T-cell (primary cell): ENCODE measurements at regions of chr16 and their contacts with region 1.

Region 1: GRCh38 chr16:53435066-53435688 is 906 bp downstream of the RBL2 start:
- DNase-seq: peak; percentile 50 to 84 (median 62)
- ATAC-seq: peak; percentile 59 to 71 (median 65)
- H3K4me3 ChIP-seq: peak overlapping the region; percentile 79 to 97
- H3K4me3 Mint-ChIP-seq: peak overlapping the region; percentile 95 to 99 (median 99)
- H3K27ac ChIP-seq: peak overlapping the region; percentile 87
- H3K27ac Mint-ChIP-seq: peak overlapping the region; percentile 99
- H3K4me1 ChIP-seq: peaks cover 15 to 26% of the 10 kb centered on the region in 2 experiments
- H3K4me1 Mint-ChIP-seq: peaks cover 44 to 52% (median 49%) of the 10 kb centered on the region in 3 donors
- H3K27me3 ChIP-seq: no peaks in the 10 kb centered on the region
- H3K27me3 Mint-ChIP-seq: no peaks in the 10 kb centered on the region

Region 2: GRCh38 chr16:53297477-53297876 is 137.7 kb before region 1 on chr16:
- CTCF ChIA-PET with region 1: no interaction called
- POLR2A ChIA-PET with region 1: interaction called in 1 of 2 experiments, 11 read pairs
- DNase-seq: no peak
- ATAC-seq: no peak
- H3K4me3 ChIP-seq: no peak overlapping the region
- H3K4me3 Mint-ChIP-seq: no peak overlapping the region
- H3K27ac ChIP-seq: no peak overlapping the region
- H3K27ac Mint-ChIP-seq: no peak overlapping the region
- H3K4me1 ChIP-seq: no peaks in the 10 kb centered on the region
- H3K4me1 Mint-ChIP-seq: no peaks in the 10 kb centered on the region
- H3K27me3 ChIP-seq: no peaks in the 10 kb centered on the region
- H3K27me3 Mint-ChIP-seq: no peaks in the 10 kb centered on the region

Region 3: GRCh38 chr16:53449632-53450517 is 14.7 kb after region 1 on chr16:
- CTCF ChIA-PET with region 1: interaction called, 4 to 31 read pairs
- POLR2A ChIA-PET with region 1: interaction called, 9 to 19 read pairs
- DNase-seq: peak in 1 of 35 experiments; percentile 25
- ATAC-seq: peak in 2 of 4 experiments; percentile 41 to 55
- H3K4me3 ChIP-seq: peak overlapping the region in 1 of 2 donors; percentile 44
- H3K4me3 Mint-ChIP-seq: peak overlapping the region; percentile 67 to 78 (median 70)
- H3K27ac ChIP-seq: peak overlapping the region; percentile 59
- H3K27ac Mint-ChIP-seq: peak overlapping the region; percentile 91 to 92
- H3K4me1 ChIP-seq: peaks cover 39 to 67% of the 10 kb centered on the region in 2 experiments
- H3K4me1 Mint-ChIP-seq: peaks cover 71 to 79% (median 78%) of the 10 kb centered on the region in 3 donors
- H3K27me3 ChIP-seq: no peaks in the 10 kb centered on the region
- H3K27me3 Mint-ChIP-seq: no peaks in the 10 kb centered on the region

Region 4: DNA sequence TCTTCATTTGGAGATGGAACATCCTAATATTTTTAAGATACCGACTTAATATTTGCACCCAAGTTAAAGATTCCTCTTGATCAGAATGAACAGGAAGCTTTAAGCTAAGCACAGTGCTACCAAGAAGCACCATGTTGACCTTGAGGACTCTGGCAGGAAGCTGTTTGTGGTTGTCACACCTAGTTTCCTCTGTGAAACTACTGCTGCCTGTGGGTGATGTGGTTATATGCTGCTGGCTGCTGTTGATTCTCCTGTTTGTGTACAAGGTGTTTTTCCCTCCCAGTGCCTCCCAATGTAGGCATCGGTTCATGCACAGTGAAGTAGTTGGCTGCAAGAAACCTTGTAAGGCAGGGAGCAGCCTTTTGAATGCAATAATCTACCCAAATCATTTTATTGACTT is 22.5 kb after region 1 on chr16:
- CTCF ChIA-PET with region 1: interaction called, 6 to 19 read pairs
- POLR2A ChIA-PET with region 1: interaction called, 9 to 14 read pairs
- DNase-seq: peak; percentile 49 to 92 (median 76)
- ATAC-seq: peak; percentile 79 to 86 (median 82)
- H3K4me3 ChIP-seq: peak overlapping the region; percentile 43 to 44
- H3K4me3 Mint-ChIP-seq: peak overlapping the region; percentile 77 to 83 (median 78)
- H3K27ac ChIP-seq: peak overlapping the region; percentile 80
- H3K27ac Mint-ChIP-seq: peak overlapping the region; percentile 90 to 95
- H3K4me1 ChIP-seq: peaks cover 52 to 82% of the 10 kb centered on the region in 2 experiments
- H3K4me1 Mint-ChIP-seq: peaks cover 90 to 95% (median 95%) of the 10 kb centered on the region in 3 donors
- H3K27me3 ChIP-seq: no peaks in the 10 kb centered on the region
- H3K27me3 Mint-ChIP-seq: no peaks in the 10 kb centered on the region

Region 5: DNA sequence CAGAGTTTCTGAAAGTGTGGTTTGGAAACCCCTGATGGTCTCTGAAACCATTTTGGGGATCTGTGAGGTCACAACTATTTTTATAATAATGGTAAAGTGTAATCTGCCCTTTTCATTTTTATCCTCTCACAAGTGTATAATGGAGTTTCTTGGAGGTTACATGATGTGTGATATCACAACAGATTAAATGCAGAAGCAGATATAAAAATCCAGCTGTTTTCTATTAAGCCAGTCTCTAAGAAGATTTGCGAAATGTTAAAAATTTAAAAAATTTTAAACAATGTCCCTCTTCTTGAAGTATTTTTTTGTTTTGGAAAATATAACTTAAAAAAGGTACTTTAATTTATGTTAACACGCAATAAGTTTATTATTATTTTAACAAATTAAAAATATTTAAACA is 219.8 kb after region 1 on chr16:
- CTCF ChIA-PET with region 1: no interaction called
- POLR2A ChIA-PET with region 1: no interaction called
- DNase-seq: no peak
- ATAC-seq: no peak
- H3K4me3 ChIP-seq: no peak overlapping the region
- H3K4me3 Mint-ChIP-seq: no peak overlapping the region
- H3K27ac ChIP-seq: no peak overlapping the region
- H3K27ac Mint-ChIP-seq: no peak overlapping the region
- H3K4me1 ChIP-seq: no peaks in the 10 kb centered on the region
- H3K4me1 Mint-ChIP-seq: no peaks in the 10 kb centered on the region
- H3K27me3 ChIP-seq: no peaks in the 10 kb centered on the region
- H3K27me3 Mint-ChIP-seq: no peaks in the 10 kb centered on the region